ENCODE measurements at regions of chr22 and their contacts with region 1.

Region 1: DNA sequence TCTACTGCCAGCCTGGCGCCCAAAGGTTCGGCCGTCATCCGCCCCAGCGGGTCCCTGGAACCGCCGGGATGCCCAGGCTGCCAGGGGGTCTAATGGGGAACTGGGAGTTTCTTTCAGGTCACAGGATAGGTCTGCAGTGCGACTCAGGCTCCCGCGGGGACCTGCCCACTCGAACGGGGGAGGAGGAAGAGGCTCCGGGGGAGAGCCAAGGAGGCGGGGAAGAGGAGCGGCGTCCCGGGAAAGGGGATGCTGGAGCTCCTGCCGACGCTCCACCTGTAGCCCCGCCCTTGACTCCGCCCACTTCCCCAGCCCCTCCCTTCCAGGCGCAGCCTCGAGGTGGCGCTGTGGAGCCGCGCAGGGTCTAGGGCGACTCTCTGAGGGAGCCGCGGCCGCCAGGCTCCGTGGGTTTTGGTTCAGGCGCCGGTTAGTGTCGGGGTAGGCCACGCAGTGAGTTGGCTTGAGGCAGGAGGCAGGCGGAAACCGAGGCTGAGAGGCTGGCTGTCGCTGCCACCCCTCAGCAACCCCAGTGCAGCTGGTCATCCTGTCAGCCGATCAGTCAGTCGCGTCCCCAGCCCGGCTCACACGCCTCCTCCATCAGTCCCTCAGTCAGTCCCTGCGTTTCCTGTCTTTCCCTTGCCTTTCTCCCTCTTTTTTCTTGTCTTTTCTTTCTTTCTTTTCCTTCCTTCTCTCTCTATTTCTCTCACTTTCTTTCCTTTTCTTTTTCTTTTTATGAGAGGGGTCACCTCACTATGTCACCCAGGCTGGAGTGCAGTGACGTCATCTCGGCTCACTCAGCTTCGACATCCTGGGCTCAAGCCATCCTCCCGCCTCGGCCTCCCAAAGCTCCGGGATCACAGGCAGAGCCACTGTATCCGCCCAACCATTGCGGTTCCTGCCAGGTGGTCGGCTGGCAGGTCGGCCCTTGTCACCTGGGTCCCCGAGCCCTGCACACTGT is 26.4 kb downstream of the YWHAH start:
- DNase-seq: peak; percentile 91
- H3K4me3 Mint-ChIP-seq: peak overlapping the region; percentile 55
- H3K27ac Mint-ChIP-seq: no peak overlapping the region
- H3K4me1 Mint-ChIP-seq: peaks cover 13% of the 10 kb centered on the region
- H3K27me3 Mint-ChIP-seq: peaks cover 45% of the 10 kb centered on the region

Region 2: DNA sequence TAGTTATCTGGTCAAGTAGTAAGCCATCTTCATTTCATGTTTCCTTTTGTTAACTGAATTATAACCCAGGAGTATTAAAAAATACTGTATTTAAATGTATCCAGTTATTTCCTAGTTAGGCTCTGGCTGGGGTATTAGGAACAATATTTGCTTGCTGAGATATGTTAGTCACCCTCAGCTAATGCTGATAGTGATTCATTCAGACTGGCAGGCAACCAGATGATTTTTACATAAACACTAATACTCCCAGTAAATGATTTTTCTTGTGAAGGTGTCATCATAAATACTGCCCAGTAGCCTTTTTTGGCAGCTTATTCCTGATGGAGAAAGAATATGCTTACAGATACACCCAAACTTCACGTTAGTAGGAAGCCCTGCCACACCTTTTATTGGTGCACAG is 18.3 kb before region 1 on chr22:
- CTCF ChIA-PET with region 1: interaction called, 38 read pairs
- DNase-seq: no peak
- H3K4me3 Mint-ChIP-seq: no peak overlapping the region
- H3K27ac Mint-ChIP-seq: no peak overlapping the region
- H3K4me1 Mint-ChIP-seq: peaks cover 77% of the 10 kb centered on the region
- H3K27me3 Mint-ChIP-seq: no peaks in the 10 kb centered on the region